Activated naive CD4-positive, alpha-beta T cell treated with anti-CD3 and anti-CD28 coated beads for 36 hours (primary cell): ENCODE measurements at regions of chr3 and their contacts with region 1.

Region 1: DNA sequence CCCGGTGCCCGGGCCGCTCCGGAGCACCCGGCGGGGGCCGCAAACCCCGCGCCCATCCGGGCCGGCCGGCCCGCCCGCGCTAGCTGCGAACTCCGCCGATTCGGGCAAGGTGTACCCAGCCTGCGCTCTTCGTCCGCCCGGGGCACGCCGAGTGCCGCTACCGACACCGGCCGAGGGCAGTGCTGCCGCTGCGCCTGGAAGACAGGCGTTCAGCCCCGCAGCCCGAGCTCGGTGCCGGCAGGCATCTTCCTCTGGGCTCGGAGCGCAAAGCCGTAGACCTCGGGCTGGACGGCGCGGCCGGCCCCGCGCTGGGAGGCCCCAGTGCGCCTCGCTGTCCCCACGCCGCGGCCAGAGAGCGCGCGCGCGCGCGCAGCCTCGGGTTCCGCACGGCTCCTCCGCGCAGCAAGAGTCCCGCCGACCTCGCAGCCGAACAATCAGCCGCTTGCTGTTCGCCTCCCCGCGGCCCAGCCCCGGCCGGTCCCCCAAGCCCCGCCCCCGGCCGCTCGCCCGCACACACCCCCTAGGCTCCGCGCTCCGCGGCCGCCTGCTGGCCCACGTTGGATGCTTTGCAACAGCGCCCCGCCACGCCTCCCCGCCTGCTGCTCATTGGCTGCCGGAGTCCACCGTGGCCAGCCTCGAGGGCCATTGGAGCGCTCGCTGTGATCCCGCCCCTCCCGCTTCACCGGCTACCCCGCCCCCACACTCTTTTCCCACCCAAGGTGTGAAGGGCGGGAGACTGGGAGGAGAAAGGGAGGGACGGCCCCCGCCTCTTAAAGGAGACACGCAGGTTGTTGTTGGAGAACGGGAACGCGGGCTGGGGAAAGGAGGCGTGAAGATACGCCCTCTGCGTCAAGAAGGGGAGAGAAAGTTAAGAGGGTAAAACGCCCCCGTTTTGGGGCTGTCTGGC is at the start of gene LRIG1:
- DNase-seq: peak; percentile 98
- H3K4me3 Mint-ChIP-seq: peak within 1 kb of the TSS; percentile 90
- H3K27ac Mint-ChIP-seq: peak within 1 kb of the TSS; percentile 84
- H3K4me1 Mint-ChIP-seq: peaks cover 50% of the 10 kb centered on the region
- H3K27me3 Mint-ChIP-seq: peaks cover 3% of the 10 kb centered on the region
- total RNA-seq, gene LRIG1: 18.3 to 19.0 TPM

Region 2: GRCh38 chr3:65971293-65972252 is 529.3 kb before region 1 on chr3:
- CTCF ChIA-PET with region 1: no interaction called
- intact Hi-C with region 1: no loop called
- DNase-seq: no peak
- H3K4me3 Mint-ChIP-seq: no peak overlapping the region
- H3K27ac Mint-ChIP-seq: no peak overlapping the region
- H3K4me1 Mint-ChIP-seq: no peaks in the 10 kb centered on the region
- H3K27me3 Mint-ChIP-seq: peaks cover 4% of the 10 kb centered on the region

Region 3: GRCh38 chr3:66220602-66221377 is 280.0 kb before region 1 on chr3 and contains the start of gene SLC25A26:
- CTCF ChIA-PET with region 1: no interaction called
- intact Hi-C with region 1: loop called (anchors 1 kb)
- DNase-seq: peak; percentile 99
- H3K4me3 Mint-ChIP-seq: peak within 1 kb of the TSS; percentile 91
- H3K27ac Mint-ChIP-seq: peak within 1 kb of the TSS; percentile 95
- H3K4me1 Mint-ChIP-seq: peaks cover 51% of the 10 kb centered on the region
- H3K27me3 Mint-ChIP-seq: no peaks in the 10 kb centered on the region
- total RNA-seq, gene SLC25A26: 25.3 to 26.3 TPM

Region 4: GRCh38 chr3:66394019-66394752 is 106.6 kb before region 1 on chr3:
- CTCF ChIA-PET with region 1: no interaction called
- intact Hi-C with region 1: loop called (anchors 1 kb)
- DNase-seq: peak; percentile 75
- H3K4me3 Mint-ChIP-seq: peak overlapping the region; percentile 73
- H3K27ac Mint-ChIP-seq: peak overlapping the region; percentile 82
- H3K4me1 Mint-ChIP-seq: peaks cover 48% of the 10 kb centered on the region
- H3K27me3 Mint-ChIP-seq: no peaks in the 10 kb centered on the region

Region 5: GRCh38 chr3:66423791-66424190 is 77.0 kb before region 1 on chr3:
- CTCF ChIA-PET with region 1: no interaction called
- intact Hi-C with region 1: loop called (anchors 5 kb)
- DNase-seq: peak; percentile 8
- H3K4me3 Mint-ChIP-seq: no peak overlapping the region
- H3K27ac Mint-ChIP-seq: no peak overlapping the region
- H3K4me1 Mint-ChIP-seq: peaks cover 21% of the 10 kb centered on the region
- H3K27me3 Mint-ChIP-seq: no peaks in the 10 kb centered on the region

Region 6: GRCh38 chr3:66480666-66481065 is 20.2 kb before region 1 on chr3:
- CTCF ChIA-PET with region 1: interaction called, 3 read pairs
- intact Hi-C with region 1: loop called (anchors 1 kb)
- DNase-seq: peak; percentile 70
- H3K4me3 Mint-ChIP-seq: peak overlapping the region; percentile 44
- H3K27ac Mint-ChIP-seq: peak overlapping the region; percentile 81
- H3K4me1 Mint-ChIP-seq: peaks cover 74% of the 10 kb centered on the region
- H3K27me3 Mint-ChIP-seq: no peaks in the 10 kb centered on the region

Region 7: DNA sequence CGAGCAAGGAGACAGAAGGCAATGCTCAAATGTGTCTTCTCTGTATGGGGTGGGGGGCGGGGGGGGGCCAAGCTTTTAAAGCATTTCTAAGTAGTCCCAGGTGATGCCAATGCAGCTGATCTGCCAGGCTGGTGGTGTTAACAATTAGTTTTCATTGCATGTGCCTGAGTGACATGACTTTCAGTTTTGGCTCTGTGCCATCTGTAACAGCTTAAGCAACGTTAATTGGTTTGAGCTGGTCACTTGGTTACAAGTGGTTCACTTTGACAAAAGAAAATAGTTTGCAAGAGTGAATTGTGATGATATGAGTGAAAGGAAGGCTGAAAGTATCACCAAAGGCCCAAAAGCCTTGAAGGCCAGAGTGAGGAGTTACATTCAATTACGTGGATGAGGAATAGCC is 26.4 kb after region 1 on chr3:
- CTCF ChIA-PET with region 1: no interaction called
- intact Hi-C with region 1: no loop called
- DNase-seq: no peak
- H3K4me3 Mint-ChIP-seq: no peak overlapping the region
- H3K27ac Mint-ChIP-seq: no peak overlapping the region
- H3K4me1 Mint-ChIP-seq: peaks cover 3% of the 10 kb centered on the region
- H3K27me3 Mint-ChIP-seq: peaks cover 9% of the 10 kb centered on the region